ENCODE measurements at regions of chr1 and their contacts with region 1.

Region 1: GRCh38 chr1:167196166-167196565 is 24.5 kb upstream of the POU2F1 start:
- DNase-seq: no peak
- ATAC-seq: no peak
- H3K4me3 ChIP-seq: no peak overlapping the region
- H3K27ac ChIP-seq: no peak overlapping the region
- H3K4me1 ChIP-seq: no peaks in the 10 kb centered on the region
- H3K27me3 ChIP-seq: no peaks in the 10 kb centered on the region

Region 2: DNA sequence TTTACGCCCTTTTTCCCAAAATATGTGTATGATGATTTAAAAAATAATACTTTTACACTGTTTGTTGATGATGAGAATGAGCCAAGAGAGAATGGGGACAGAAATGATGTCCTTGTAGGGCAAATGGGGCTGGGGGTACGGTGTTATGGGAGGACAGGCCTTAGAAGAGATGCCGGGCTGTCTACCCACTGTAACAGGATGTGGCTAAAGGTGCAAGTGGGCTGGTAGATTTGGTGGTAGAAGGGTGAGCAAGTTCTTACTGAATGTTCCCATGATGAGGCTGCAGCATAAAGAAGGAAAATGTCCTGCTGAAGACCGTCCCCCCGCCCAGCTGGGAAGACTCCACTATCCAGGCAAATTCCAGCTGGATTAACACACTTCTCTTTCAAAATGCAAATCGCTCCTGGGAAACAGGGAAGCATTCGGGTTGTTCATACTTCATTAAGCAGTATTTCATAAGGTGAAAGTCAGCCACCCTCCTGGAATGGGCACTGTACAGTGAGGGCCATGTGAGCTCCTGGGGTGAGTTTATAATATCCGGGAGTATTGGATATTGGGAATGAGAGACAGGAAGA is 119.9 kb before region 1 on chr1:
- intact Hi-C with region 1: loop called in 1 of 2 experiments (anchors 10 kb)
- DNase-seq: no peak
- ATAC-seq: no peak
- H3K4me3 ChIP-seq: no peak overlapping the region
- H3K27ac ChIP-seq: no peak overlapping the region
- H3K4me1 ChIP-seq: no peaks in the 10 kb centered on the region
- H3K27me3 ChIP-seq: no peaks in the 10 kb centered on the region